ENCODE measurements at regions of chr1 and their contacts with region 1.

Region 1: GRCh38 chr1:188782219-188782841 is 1695.3 kb downstream of the BRINP3 start:
- DNase-seq: peak in 1 of 2 experiments; percentile 23
- H3K4me3 ChIP-seq: no peak overlapping the region
- H3K27ac ChIP-seq: no peak overlapping the region
- H3K4me1 ChIP-seq: no peaks in the 10 kb centered on the region
- H3K27me3 ChIP-seq: no peaks in the 10 kb centered on the region
- CTCF ChIP-seq: peak; percentile 51 to 86 (median 63)
- EP300 ChIP-seq: no peak
- POLR2A ChIP-seq: no peak
- RAD21 ChIP-seq: peak; percentile 71 to 83

Region 2: GRCh38 chr1:188769181-188769580 is 13.1 kb before region 1 on chr1:
- CTCF ChIA-PET with region 1: interaction called, 11 read pairs
- POLR2A ChIA-PET with region 1: no interaction called
- DNase-seq: no peak
- H3K4me3 ChIP-seq: no peak overlapping the region
- H3K27ac ChIP-seq: no peak overlapping the region
- H3K4me1 ChIP-seq: peaks cover 0 to 5% (median 0%) of the 10 kb centered on the region in 4 experiments; a peak in 1 of 7 replicates
- H3K27me3 ChIP-seq: no peaks in the 10 kb centered on the region
- CTCF ChIP-seq: no peak
- EP300 ChIP-seq: no peak
- POLR2A ChIP-seq: no peak
- RAD21 ChIP-seq: no peak

Region 3: DNA sequence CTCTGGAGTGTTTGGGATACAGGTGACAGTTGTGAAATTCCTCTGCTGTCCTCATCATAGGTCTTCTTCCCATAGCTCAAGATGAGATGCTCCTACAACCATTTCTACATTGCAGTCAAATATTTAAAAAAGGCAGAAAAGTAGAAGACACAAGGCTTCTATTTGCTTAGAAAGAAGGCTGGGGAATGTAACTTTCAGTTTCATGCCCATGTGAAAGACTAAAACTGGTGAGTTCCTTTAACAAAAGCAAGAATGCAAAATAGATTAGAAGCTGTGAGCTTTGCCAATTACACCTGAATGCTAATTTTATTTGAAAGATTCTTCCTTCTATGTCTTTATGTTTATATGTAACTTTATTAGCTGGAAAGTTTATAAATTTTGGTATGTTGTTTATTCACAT is 12.6 kb after region 1 on chr1:
- CTCF ChIA-PET with region 1: interaction called, 12 read pairs
- POLR2A ChIA-PET with region 1: no interaction called
- DNase-seq: no peak
- H3K4me3 ChIP-seq: no peak overlapping the region
- H3K27ac ChIP-seq: no peak overlapping the region
- H3K4me1 ChIP-seq: no peaks in the 10 kb centered on the region
- H3K27me3 ChIP-seq: no peaks in the 10 kb centered on the region
- CTCF ChIP-seq: no peak
- EP300 ChIP-seq: no peak
- POLR2A ChIP-seq: no peak
- RAD21 ChIP-seq: no peak

Region 4: GRCh38 chr1:188937965-188938551 is 155.7 kb after region 1 on chr1:
- CTCF ChIA-PET with region 1: interaction called, 13 read pairs
- POLR2A ChIA-PET with region 1: no interaction called
- DNase-seq: no peak
- H3K4me3 ChIP-seq: no peak overlapping the region
- H3K27ac ChIP-seq: no peak overlapping the region
- H3K4me1 ChIP-seq: peaks cover 0 to 4% (median 0%) of the 10 kb centered on the region in 4 experiments; a peak in 1 of 7 replicates
- H3K27me3 ChIP-seq: no peaks in the 10 kb centered on the region
- CTCF ChIP-seq: peak in 2 of 3 experiments; percentile 47; a peak in 3 of 4 replicates
- EP300 ChIP-seq: no peak
- POLR2A ChIP-seq: no peak
- RAD21 ChIP-seq: peak; percentile 46 to 66